Common myeloid progenitor, CD34-positive (primary cell): ENCODE measurements at regions of chr1 and their contacts with region 1.

Region 1: DNA sequence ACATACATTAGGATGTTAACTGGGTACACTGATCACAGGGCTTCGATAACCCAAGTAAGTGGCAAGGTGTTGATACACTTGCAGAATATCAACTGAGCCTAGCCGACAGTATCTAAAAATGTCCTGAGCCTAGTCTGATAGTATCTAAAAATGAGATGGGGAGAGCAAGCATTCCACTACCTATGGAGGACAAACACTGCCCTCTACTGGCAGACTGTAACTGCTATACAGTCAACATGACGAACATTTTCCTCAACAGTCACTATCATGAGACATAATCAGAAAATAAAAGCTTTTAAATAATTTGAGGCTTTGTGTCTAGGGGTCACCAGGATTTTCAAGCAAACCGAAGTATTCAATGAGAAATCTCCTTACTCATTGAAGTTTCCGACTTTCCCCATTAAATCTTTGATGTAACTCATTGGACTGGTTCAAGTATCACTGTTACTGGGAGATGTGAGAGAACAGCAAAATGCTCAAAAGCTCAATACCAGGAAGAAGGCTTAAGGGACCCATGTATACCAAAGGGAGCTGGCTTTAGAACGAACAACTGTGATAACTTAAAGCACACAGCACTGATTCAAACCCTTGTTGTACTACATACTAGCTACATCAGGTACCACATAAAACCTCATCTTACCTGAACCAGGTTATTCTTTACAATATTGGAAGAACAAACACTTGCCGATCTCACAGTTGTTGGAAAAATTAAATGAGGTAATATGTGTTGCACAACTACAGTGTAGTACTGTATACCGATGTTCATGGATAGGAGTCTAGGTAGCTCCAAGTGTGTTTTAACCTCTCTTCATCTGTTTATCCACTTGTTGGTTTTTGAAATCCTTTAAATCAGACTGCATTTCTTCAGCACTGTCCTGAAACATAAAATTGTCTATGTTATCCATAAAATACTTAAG is 31.1 kb upstream of the SLC45A3 start:
- DNase-seq: peak; percentile 87 to 92 (median 88)
- H3K4me3 ChIP-seq: no peak overlapping the region
- H3K27ac ChIP-seq: no peak overlapping the region
- H3K4me1 ChIP-seq: peaks cover 26 to 50% (median 34%) of the 10 kb centered on the region in 4 experiments
- H3K27me3 ChIP-seq: no peaks in the 10 kb centered on the region

Region 2: DNA sequence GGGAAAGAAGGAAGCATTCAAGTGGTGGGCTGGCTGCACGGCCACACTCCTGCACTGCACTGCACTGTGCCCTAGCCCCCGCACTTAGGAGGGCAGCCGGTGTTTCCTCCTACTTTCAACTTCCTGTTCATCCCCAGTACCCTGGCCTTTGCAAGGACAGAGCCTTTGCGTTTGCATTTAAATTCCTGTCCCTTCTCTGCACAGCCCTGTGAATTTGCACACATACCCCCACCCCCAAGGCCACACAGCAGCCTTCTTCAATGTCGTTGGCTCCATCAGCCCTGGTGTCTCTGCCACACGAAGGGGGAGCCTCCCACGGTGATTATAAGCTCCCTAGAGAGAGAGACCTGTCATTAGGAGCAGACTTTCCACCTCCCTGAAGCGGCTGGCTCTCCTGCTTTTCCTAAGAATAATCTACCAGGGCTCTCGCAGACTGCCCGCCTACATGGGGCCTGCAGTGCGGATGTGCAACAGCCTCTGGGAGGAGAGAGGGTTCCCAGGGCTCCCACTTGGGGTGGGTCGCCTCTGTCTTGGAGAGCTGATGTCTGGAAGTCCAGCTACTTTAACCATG is 17.9 kb before region 1 on chr1:
- CTCF ChIA-PET with region 1: interaction called, 16 read pairs
- POLR2A ChIA-PET with region 1: interaction called, 5 read pairs
- DNase-seq: peak in 1 of 3 donors; percentile 58
- H3K4me3 ChIP-seq: peak overlapping the region in 2 of 7 experiments; percentile 11 to 38
- H3K27ac ChIP-seq: peak overlapping the region in 1 of 2 experiments; percentile 21
- H3K4me1 ChIP-seq: peaks cover 3 to 64% (median 54%) of the 10 kb centered on the region in 4 experiments
- H3K27me3 ChIP-seq: no peaks in the 10 kb centered on the region

Region 3: DNA sequence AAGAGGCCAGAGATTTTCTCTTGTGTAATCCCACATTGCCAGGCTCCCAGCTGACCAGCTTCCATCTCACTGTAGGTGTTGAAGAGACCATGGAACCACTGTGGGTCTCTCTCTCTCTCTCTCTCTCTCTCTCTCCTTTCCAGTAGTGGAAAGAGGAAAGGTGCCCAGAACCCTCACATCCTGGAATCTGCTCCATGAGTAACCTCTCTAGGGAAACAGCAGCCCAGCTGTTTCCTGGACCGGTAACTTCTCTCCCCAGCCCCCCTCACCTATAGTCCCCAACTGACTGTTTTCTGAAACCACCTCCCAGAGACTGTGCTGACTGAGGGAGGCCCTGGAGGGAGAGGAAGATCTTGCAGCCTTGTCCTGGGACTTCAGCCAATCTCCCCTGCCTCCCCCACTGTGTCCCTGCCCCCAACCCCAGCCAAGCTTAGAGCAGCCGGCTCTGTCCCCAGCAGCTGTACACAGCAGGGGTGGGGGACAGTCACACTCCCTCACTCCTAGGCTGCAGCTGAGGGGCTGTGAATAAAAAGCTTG is 10.4 kb before region 1 on chr1:
- CTCF ChIA-PET with region 1: interaction called, 13 read pairs
- POLR2A ChIA-PET with region 1: interaction called, 3 read pairs
- DNase-seq: peak in 2 of 3 donors; percentile 76 to 84
- H3K4me3 ChIP-seq: peak overlapping the region in 3 of 7 experiments; percentile 32 to 60 (median 37)
- H3K27ac ChIP-seq: peak overlapping the region in 1 of 2 experiments; percentile 51
- H3K4me1 ChIP-seq: peaks cover 27 to 80% (median 72%) of the 10 kb centered on the region in 4 experiments
- H3K27me3 ChIP-seq: no peaks in the 10 kb centered on the region

Region 4: DNA sequence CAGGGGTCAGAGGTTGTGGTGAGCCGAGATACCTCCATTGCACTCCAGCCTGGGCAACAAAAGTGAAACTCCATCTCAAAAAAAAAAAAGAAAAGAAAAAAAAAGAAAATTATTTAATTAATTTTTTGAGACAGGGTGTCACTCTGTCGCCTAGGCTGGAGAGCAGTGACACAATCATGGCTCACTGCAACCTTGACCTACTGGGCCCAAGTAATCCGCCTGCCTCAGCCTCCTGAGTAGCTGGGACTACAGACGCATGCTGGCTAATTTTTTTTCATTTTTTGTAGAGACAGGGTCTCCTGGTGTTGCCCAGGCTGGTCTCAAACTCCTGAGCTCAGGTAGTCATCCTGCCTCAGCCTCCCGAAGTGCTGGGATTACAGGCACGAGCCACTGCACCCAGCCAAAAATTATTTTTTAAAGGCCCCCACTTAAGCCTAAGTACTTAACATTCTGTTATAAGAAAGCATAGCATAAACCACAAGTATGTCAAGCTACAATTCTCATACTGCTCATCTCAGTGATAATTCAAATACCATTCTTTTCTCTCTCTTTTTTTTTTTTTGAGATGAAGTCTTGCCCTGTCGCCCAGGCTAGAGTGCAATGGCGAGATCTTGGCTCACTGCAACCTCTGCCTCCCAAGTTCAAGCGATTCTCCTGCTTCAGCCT is 18.7 kb after region 1 on chr1:
- CTCF ChIA-PET with region 1: interaction called, 60 read pairs
- POLR2A ChIA-PET with region 1: interaction called, 8 read pairs
- DNase-seq: no peak
- H3K4me3 ChIP-seq: no peak overlapping the region
- H3K27ac ChIP-seq: no peak overlapping the region
- H3K4me1 ChIP-seq: no peaks in the 10 kb centered on the region
- H3K27me3 ChIP-seq: no peaks in the 10 kb centered on the region

Region 5: DNA sequence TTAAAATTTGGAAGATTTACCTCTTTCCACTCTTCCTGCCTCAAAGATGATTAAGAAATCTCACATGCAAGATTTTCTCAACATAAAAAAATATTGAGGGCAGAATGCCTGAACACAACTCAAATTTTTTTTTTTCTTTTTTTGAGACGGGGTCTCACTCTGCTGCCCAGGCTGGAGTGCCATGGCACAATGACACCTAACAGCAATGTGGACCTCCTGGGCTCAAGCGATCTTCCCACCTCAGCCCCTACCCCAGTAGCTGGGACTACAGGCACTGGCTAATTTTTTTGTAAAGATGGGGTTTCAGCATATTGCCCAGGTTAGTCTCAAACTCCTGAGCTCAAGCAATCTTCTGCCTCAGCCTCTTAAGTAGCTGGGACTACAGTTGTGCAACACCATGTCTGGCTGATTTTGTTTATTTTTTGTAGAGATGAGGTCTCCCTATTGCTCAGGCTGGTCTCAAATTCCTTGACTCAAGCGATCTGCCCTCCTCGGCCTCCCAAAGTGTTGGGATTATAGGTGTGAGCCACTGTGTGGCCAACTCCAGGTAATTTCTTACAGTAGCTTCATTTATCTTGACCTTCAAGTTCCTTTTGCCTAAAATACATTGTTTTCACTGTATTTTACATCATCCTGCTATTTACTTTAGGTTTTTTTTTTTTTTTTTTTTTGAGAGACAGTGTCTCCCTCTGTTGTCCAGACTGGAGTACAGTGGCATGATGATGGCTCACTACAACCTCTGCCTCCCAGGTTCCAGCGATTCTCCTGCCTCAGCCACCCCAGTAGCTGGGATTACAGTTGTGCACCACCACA is 28.2 kb after region 1 on chr1:
- CTCF ChIA-PET with region 1: interaction called, 39 read pairs
- POLR2A ChIA-PET with region 1: no interaction called
- DNase-seq: peak in 1 of 3 donors; percentile 17
- H3K4me3 ChIP-seq: no peak overlapping the region
- H3K27ac ChIP-seq: no peak overlapping the region
- H3K4me1 ChIP-seq: peaks cover 0 to 12% (median 4%) of the 10 kb centered on the region in 4 experiments
- H3K27me3 ChIP-seq: no peaks in the 10 kb centered on the region

Region 6: GRCh38 chr1:205756552-205756951 is 45.2 kb after region 1 on chr1:
- CTCF ChIA-PET with region 1: no interaction called
- POLR2A ChIA-PET with region 1: no interaction called
- DNase-seq: no peak
- H3K4me3 ChIP-seq: no peak overlapping the region
- H3K27ac ChIP-seq: no peak overlapping the region
- H3K4me1 ChIP-seq: no peaks in the 10 kb centered on the region
- H3K27me3 ChIP-seq: no peaks in the 10 kb centered on the region